ENCODE measurements at regions of chr1 and their contacts with region 1.

Region 1: DNA sequence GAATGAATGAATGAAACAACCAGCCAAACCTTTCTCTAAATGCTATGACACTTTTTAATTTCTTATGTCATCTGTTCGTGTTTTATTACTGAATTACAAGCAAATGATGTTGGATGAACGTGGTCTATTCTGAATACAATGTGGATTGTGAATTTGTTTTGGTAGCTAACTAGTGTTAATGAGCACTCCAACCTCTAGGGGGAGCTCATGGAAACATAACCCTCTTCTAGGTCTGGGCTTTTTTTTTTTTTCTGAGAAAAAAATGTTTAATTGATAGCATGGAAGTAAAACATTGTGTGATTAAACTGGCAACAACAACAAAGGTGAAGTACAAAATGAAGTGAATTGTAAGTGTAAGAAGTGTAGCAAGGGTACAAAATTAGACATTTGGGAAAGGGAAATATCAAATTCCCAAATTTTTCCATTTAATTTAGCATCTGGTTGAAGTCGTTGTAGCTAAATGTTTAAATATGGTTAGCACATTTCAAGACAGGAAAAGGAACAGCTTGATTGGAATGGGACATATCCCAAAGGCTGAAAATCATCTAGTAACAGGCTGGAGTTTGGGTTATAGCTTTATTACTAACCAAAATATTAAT is 42.6 kb upstream of the PTGS2 start:
- DNase-seq: no peak
- ATAC-seq: peak; percentile 76
- H3K4me3 ChIP-seq: no peak overlapping the region
- H3K27ac ChIP-seq: no peak overlapping the region
- H3K4me1 ChIP-seq: no peaks in the 10 kb centered on the region
- H3K27me3 ChIP-seq: no peaks in the 10 kb centered on the region
- CTCF ChIP-seq: peak; percentile 48 to 73 (median 56)
- EP300 ChIP-seq: no peak
- POLR2A ChIP-seq: no peak
- RAD21 ChIP-seq: peak; percentile 80

Region 2: DNA sequence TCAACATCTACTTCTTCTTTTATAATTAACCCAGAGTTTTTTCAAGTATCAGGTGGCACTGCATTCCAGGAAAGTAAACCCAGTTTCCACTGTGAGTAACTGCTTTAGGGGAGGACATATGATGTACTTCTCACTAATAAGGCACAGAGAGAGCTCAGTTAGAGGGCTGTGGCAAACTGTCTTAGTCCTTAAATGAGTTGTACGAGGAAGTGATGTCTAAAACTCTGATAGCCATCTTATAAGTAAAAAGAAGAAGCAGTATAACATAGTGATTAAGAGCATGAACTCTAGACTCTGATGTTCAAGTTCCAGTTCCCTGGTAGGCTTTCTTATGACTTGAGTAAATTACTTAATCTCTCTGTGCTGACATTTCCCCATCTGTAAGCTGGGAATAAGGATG is 16.1 kb after region 1 on chr1:
- CTCF ChIA-PET with region 1: interaction called, 11 read pairs
- POLR2A ChIA-PET with region 1: interaction called, 6 read pairs
- RAD21 ChIA-PET with region 1: no interaction called
- SMC1A ChIA-PET with region 1: interaction called, 4 read pairs
- in situ Hi-C with region 1: no loop called
- intact Hi-C with region 1: no loop called
- DNase-seq: no peak
- ATAC-seq: peak; percentile 87
- H3K4me3 ChIP-seq: no peak overlapping the region
- H3K27ac ChIP-seq: peak overlapping the region; percentile 28; the same call in 1 of the 2 replicates
- H3K4me1 ChIP-seq: peaks cover 8% of the 10 kb centered on the region; the same call in 1 of the 2 replicates
- H3K27me3 ChIP-seq: no peaks in the 10 kb centered on the region
- CTCF ChIP-seq: no peak
- EP300 ChIP-seq: no peak; a peak in 1 of 4 replicates
- POLR2A ChIP-seq: no peak
- RAD21 ChIP-seq: no peak

Region 3: GRCh38 chr1:186834411-186834958 is 111.7 kb after region 1 on chr1:
- CTCF ChIA-PET with region 1: no interaction called
- POLR2A ChIA-PET with region 1: no interaction called
- RAD21 ChIA-PET with region 1: no interaction called
- SMC1A ChIA-PET with region 1: no interaction called
- in situ Hi-C with region 1: no loop called
- intact Hi-C with region 1: no loop called
- DNase-seq: no peak
- ATAC-seq: no peak
- H3K4me3 ChIP-seq: no peak overlapping the region
- H3K27ac ChIP-seq: no peak overlapping the region
- H3K4me1 ChIP-seq: peaks cover 3% of the 10 kb centered on the region; the same call in 1 of the 2 replicates
- H3K27me3 ChIP-seq: no peaks in the 10 kb centered on the region
- CTCF ChIP-seq: no peak
- EP300 ChIP-seq: no peak
- POLR2A ChIP-seq: no peak
- RAD21 ChIP-seq: no peak

Region 4: GRCh38 chr1:186849271-186849671 is 126.5 kb after region 1 on chr1:
- CTCF ChIA-PET with region 1: interaction called, 5 read pairs
- POLR2A ChIA-PET with region 1: no interaction called
- RAD21 ChIA-PET with region 1: no interaction called
- SMC1A ChIA-PET with region 1: no interaction called
- in situ Hi-C with region 1: no loop called
- intact Hi-C with region 1: loop called (anchors 10 kb)
- DNase-seq: peak; percentile 67
- ATAC-seq: peak; percentile 97
- H3K4me3 ChIP-seq: peak overlapping the region; percentile 37; the same call in 1 of the 2 replicates
- H3K27ac ChIP-seq: no peak overlapping the region; the same call in 1 of the 2 replicates
- H3K4me1 ChIP-seq: peaks cover 5% of the 10 kb centered on the region; the same call in 1 of the 2 replicates
- H3K27me3 ChIP-seq: no peaks in the 10 kb centered on the region
- CTCF ChIP-seq: no peak
- EP300 ChIP-seq: peak in 1 of 2 experiments; percentile 58; a peak in 1 of 4 replicates
- POLR2A ChIP-seq: no peak
- RAD21 ChIP-seq: no peak

Region 5: GRCh38 chr1:186915555-186915954 is 192.7 kb after region 1 on chr1:
- CTCF ChIA-PET with region 1: no interaction called
- POLR2A ChIA-PET with region 1: no interaction called
- RAD21 ChIA-PET with region 1: interaction called, 4 read pairs
- SMC1A ChIA-PET with region 1: no interaction called
- in situ Hi-C with region 1: no loop called
- intact Hi-C with region 1: loop called (anchors 10 kb)
- DNase-seq: no peak
- ATAC-seq: no peak
- H3K4me3 ChIP-seq: no peak overlapping the region
- H3K27ac ChIP-seq: no peak overlapping the region
- H3K4me1 ChIP-seq: no peaks in the 10 kb centered on the region
- H3K27me3 ChIP-seq: no peaks in the 10 kb centered on the region; a peak in 1 of 4 replicates
- CTCF ChIP-seq: 0 out of 6 replicates have a peak, but pooled peaks of 1 of the 3 experiments have one; percentile 5
- EP300 ChIP-seq: no peak
- POLR2A ChIP-seq: no peak
- RAD21 ChIP-seq: peak; percentile 33; the same call in 1 of the 2 replicates